Activated CD8-positive, alpha-beta T cell treated with anti-CD3 and anti-CD28 coated beads, Interleukin-2, amount 10 ng/mL, durations not matched to agents 7 days and 5 days (primary cell): ENCODE measurements at regions of chr2 and their contacts with region 1.

Region 1: DNA sequence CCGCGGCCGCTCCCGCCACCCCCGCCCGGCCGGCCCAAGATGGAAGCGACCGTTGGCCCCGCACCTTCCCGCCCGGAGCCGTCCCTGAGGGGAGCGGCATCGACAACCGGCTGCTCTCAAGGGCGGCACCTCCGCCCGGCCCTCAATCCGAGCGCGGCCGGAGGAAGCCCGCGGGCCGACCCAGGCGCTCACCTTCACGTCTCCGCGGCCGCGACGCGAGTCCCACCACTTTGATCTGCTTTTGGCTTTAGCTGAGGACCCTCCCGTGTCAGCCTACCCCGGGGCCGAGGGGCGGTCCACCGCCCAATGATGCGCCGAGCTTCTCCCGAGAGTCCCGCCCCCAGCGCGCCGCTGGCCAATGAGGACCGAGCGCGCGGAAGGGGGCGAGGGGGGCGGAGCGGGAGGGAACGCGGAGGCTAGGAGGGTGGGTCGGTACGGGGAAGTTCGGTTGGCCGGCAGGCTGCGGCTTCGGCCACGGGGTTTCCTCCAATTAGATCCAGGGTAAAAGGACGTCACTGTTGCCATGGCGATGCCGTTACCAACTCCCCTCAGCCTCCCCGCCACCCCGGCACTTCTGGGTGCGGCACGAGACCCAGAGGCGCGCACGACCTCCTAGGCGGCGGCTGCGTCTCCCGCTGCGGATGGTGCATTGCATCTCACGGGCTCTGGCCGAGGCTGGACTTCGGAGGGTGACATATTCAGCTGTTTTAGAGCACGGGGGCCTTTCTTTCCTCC is at the start of gene YWHAQ:
- DNase-seq: peak; percentile 98
- ATAC-seq: peak; percentile 90
- H3K4me3 Mint-ChIP-seq: peak within 1 kb of the TSS; percentile 97
- H3K27ac Mint-ChIP-seq: peak within 1 kb of the TSS; percentile 96
- H3K4me1 Mint-ChIP-seq: peaks cover 45% of the 10 kb centered on the region
- H3K27me3 Mint-ChIP-seq: peaks cover 25% of the 10 kb centered on the region
- total RNA-seq, gene YWHAQ: 292 to 315 TPM

Region 2: GRCh38 chr2:9423100-9423921 is 207.6 kb before region 1 on chr2 and contains the starts of genes CPSF3 and ITGB1BP1:
- CTCF ChIA-PET with region 1: no interaction called
- POLR2A ChIA-PET with region 1: interaction called, 16 read pairs
- DNase-seq: peak; percentile 98
- ATAC-seq: peak; percentile 89
- H3K4me3 Mint-ChIP-seq: no peak within 1 kb of the TSS
- H3K27ac Mint-ChIP-seq: peak within 1 kb of the TSS; percentile 91
- H3K4me1 Mint-ChIP-seq: peaks cover 32% of the 10 kb centered on the region
- H3K27me3 Mint-ChIP-seq: no peaks in the 10 kb centered on the region
- total RNA-seq, gene CPSF3: 54.1 to 55.2 TPM
- total RNA-seq, gene ITGB1BP1: 170 to 177 TPM

Region 3: DNA sequence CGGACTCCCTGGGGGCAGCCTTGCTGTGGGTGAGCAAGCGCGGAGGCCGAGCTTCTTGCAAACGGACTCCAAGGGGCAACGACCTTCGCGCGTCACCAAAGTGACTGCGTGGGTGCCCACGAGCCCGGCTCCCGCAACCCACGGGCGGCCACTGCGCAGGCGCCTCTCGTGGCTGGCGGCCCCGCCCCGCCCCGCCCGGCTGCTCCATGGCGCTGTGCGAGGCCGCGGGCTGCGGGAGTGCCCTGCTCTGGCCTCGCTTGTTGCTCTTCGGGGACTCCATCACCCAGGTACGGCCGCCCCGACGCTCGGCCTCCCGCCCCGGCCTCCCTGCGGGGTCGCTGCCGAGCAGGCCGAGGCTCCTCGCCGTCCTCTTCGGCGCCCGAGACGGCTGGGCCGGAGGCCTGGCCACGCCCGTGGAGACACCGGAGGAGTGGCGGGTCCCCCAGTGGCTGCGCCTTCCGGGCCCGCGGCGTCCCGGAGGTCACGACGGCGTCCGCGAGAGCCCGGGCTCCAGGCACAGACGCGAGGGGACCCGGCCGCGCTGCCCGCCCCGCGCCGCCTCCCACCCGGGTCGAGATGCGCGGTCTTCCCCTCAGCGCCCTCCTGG is 156.5 kb before region 1 on chr2 and contains the start of gene IAH1:
- CTCF ChIA-PET with region 1: interaction called, 3 read pairs
- POLR2A ChIA-PET with region 1: interaction called, 13 read pairs
- DNase-seq: peak; percentile 75
- ATAC-seq: peak; percentile 90
- H3K4me3 Mint-ChIP-seq: peak within 1 kb of the TSS; percentile 79
- H3K27ac Mint-ChIP-seq: peak within 1 kb of the TSS; percentile 86
- H3K4me1 Mint-ChIP-seq: peaks cover 41% of the 10 kb centered on the region
- H3K27me3 Mint-ChIP-seq: no peaks in the 10 kb centered on the region
- total RNA-seq, gene IAH1: 71.7 to 73.3 TPM

Region 4: GRCh38 chr2:9538000-9538507 is 92.9 kb before region 1 on chr2:
- CTCF ChIA-PET with region 1: no interaction called
- POLR2A ChIA-PET with region 1: no interaction called
- DNase-seq: no peak
- ATAC-seq: no peak
- H3K4me3 Mint-ChIP-seq: no peak overlapping the region
- H3K27ac Mint-ChIP-seq: no peak overlapping the region
- H3K4me1 Mint-ChIP-seq: peaks cover 21% of the 10 kb centered on the region
- H3K27me3 Mint-ChIP-seq: no peaks in the 10 kb centered on the region

Region 5: GRCh38 chr2:9555297-9556141 is 75.4 kb before region 1 on chr2 and contains the start of gene ADAM17:
- CTCF ChIA-PET with region 1: interaction called, 12 read pairs
- POLR2A ChIA-PET with region 1: interaction called, 47 read pairs
- DNase-seq: peak; percentile 89
- ATAC-seq: peak; percentile 94
- H3K4me3 Mint-ChIP-seq: peak within 1 kb of the TSS; percentile 99
- H3K27ac Mint-ChIP-seq: peak within 1 kb of the TSS; percentile 98
- H3K4me1 Mint-ChIP-seq: peaks cover 61% of the 10 kb centered on the region
- H3K27me3 Mint-ChIP-seq: no peaks in the 10 kb centered on the region
- total RNA-seq, gene ADAM17: 20.7 to 25.0 TPM

Region 6: DNA sequence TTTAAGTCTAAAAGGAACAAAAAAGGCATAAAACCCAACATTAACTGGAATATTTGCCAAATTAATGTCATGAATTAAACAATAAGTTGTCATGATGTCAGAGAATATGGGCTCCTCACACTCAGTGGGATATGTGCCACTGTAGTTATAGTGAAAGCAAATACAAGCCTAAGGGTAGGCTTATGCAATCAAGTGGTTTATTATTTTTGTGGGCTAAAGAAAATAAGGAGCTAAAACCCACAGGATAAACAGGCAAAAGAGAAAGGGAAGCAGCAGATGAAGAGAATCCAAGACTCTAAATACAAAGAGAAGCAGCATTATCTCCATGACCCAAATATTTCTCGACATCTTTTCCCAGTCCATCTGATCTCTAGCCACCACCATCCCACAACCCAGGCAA is 17.6 kb before region 1 on chr2:
- CTCF ChIA-PET with region 1: interaction called, 9 read pairs
- POLR2A ChIA-PET with region 1: interaction called, 41 read pairs
- DNase-seq: no peak
- ATAC-seq: no peak
- H3K4me3 Mint-ChIP-seq: no peak overlapping the region
- H3K27ac Mint-ChIP-seq: no peak overlapping the region
- H3K4me1 Mint-ChIP-seq: peaks cover 83% of the 10 kb centered on the region
- H3K27me3 Mint-ChIP-seq: no peaks in the 10 kb centered on the region

Region 7: GRCh38 chr2:9618410-9618809 is 12.5 kb before region 1 on chr2:
- CTCF ChIA-PET with region 1: interaction called, 9 read pairs
- POLR2A ChIA-PET with region 1: interaction called, 41 read pairs
- DNase-seq: peak; percentile 69
- ATAC-seq: peak; percentile 92
- H3K4me3 Mint-ChIP-seq: peak overlapping the region; percentile 60
- H3K27ac Mint-ChIP-seq: peak overlapping the region; percentile 89
- H3K4me1 Mint-ChIP-seq: peaks cover 83% of the 10 kb centered on the region
- H3K27me3 Mint-ChIP-seq: no peaks in the 10 kb centered on the region

Region 8: GRCh38 chr2:9656270-9656766 is 25.4 kb after region 1 on chr2:
- CTCF ChIA-PET with region 1: interaction called, 5 read pairs
- POLR2A ChIA-PET with region 1: interaction called, 35 read pairs
- DNase-seq: peak; percentile 72
- ATAC-seq: peak; percentile 87
- H3K4me3 Mint-ChIP-seq: no peak overlapping the region
- H3K27ac Mint-ChIP-seq: peak overlapping the region; percentile 17
- H3K4me1 Mint-ChIP-seq: peaks cover 25% of the 10 kb centered on the region
- H3K27me3 Mint-ChIP-seq: peaks cover 15% of the 10 kb centered on the region